Aorta (tissue), 5 donors: ENCODE measurements at regions of chr7 and their contacts with region 1.

Region 1: DNA sequence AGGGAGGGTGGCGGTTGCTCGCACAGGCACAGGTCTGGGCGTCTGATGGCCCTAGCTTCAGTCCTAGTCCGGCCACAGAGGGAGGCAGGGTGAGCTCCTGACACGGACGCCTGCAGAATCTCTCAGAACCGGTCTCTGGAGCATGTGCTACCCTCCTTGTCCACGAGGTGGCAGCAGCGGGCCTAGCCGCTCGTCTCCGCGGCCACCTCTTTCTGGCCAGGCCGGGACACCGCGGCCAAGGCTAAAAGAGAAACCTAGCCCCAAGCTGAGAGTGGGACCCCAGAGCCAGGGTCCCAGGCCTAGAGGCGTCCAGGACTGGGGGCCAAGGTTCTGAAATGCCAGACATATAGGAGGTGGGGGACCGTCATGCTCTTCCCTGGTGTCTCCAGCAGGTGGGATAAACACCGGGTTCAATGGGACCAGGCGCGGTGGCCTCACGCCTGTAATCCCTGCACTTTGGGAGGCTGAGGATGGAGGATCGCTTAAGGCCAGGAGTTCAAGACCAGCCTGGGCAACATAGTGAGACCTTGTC is 3.2 kb upstream of the LAT2 start:
- DNase-seq: peak; percentile 93 to 97
- ATAC-seq: peak; percentile 92
- H3K4me3 ChIP-seq: no peak overlapping the region
- H3K27ac ChIP-seq: no peak overlapping the region
- H3K4me1 ChIP-seq: no peaks in the 10 kb centered on the region
- H3K27me3 ChIP-seq: no peaks in the 10 kb centered on the region

Region 2: DNA sequence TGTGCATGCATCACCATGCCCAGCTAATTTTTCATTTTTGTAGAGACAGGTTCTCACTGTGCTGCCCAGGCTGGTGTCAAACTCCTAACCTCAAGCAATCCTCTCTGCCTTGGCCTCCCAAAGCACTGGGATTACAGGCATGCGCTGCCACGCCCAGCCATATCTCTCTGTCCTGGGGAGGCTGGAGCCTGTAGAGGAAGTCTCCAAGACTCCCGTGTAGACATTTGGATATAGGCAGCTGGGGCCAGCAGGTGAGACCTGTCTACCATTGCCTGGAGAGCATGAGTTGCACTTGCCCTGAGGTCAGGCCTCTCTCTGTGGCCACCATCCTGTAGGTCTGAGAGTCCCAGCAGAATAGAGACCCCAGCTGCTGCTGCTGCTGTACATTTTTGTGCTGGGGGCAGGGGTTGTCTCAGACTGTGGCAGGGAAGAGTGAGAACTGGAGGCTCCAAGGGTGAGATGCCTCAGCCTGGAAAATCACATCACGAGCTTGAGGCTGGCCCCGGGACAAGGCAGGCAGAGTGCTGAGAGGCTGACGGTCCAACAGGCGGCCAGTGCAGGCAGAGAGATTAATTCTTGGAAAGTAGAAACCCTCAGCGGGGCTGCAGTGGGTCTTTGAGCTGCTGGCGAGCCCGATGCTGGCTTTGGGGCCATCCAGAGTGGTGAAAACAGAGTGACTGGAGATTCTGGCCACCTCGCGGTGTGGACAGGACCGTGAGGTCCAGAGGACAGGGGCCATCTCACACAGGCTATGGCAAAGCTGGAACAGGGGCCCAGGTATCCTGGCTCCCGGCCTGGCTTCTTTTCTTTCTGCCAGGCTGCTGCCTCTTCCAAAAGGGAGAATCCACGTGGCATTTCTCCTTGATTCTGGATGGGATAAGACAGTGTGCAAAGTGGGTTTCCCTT is 284.8 kb before region 1 on chr7:
- intact Hi-C with region 1: no loop called
- DNase-seq: no peak
- ATAC-seq: peak; percentile 62
- H3K4me3 ChIP-seq: no peak overlapping the region
- H3K27ac ChIP-seq: no peak overlapping the region
- H3K4me1 ChIP-seq: no peaks in the 10 kb centered on the region
- H3K27me3 ChIP-seq: no peaks in the 10 kb centered on the region

Region 3: GRCh38 chr7:74068393-74069085 is 138.1 kb before region 1 on chr7:
- intact Hi-C with region 1: loop called in 1 of 2 experiments (anchors 5 kb)
- DNase-seq: peak; percentile 56 to 76
- ATAC-seq: peak; percentile 26
- H3K4me3 ChIP-seq: no peak overlapping the region
- H3K27ac ChIP-seq: peak overlapping the region in 1 of 2 donors; percentile 55
- H3K4me1 ChIP-seq: no peaks in the 10 kb centered on the region
- H3K27me3 ChIP-seq: no peaks in the 10 kb centered on the region

Region 4: GRCh38 chr7:74254129-74254857 is 47.6 kb after region 1 on chr7 and contains the start of gene RFC2:
- intact Hi-C with region 1: loop called in 1 of 2 experiments (anchors 2 kb)
- DNase-seq: peak; percentile 98 to 99
- ATAC-seq: peak; percentile 100
- H3K4me3 ChIP-seq: peak within 1 kb of the TSS; percentile 70 to 85
- H3K27ac ChIP-seq: peak within 1 kb of the TSS in 1 of 2 donors; percentile 60
- H3K4me1 ChIP-seq: no peaks in the 10 kb centered on the region
- H3K27me3 ChIP-seq: no peaks in the 10 kb centered on the region
- total RNA-seq, gene RFC2: 13.7 to 14.2 TPM

Region 5: GRCh38 chr7:74401137-74401859 is 194.6 kb after region 1 on chr7:
- intact Hi-C with region 1: loop called (anchors 1 to 2 kb)
- DNase-seq: peak; percentile 74 to 89
- ATAC-seq: peak; percentile 73
- H3K4me3 ChIP-seq: no peak overlapping the region
- H3K27ac ChIP-seq: no peak overlapping the region
- H3K4me1 ChIP-seq: no peaks in the 10 kb centered on the region
- H3K27me3 ChIP-seq: no peaks in the 10 kb centered on the region